Activated CD4-positive, alpha-beta memory T cell treated with anti-CD3 and anti-CD28 coated beads for 36 hours (primary cell): ENCODE measurements at regions of chr17 and their contacts with region 1.

Region 1: DNA sequence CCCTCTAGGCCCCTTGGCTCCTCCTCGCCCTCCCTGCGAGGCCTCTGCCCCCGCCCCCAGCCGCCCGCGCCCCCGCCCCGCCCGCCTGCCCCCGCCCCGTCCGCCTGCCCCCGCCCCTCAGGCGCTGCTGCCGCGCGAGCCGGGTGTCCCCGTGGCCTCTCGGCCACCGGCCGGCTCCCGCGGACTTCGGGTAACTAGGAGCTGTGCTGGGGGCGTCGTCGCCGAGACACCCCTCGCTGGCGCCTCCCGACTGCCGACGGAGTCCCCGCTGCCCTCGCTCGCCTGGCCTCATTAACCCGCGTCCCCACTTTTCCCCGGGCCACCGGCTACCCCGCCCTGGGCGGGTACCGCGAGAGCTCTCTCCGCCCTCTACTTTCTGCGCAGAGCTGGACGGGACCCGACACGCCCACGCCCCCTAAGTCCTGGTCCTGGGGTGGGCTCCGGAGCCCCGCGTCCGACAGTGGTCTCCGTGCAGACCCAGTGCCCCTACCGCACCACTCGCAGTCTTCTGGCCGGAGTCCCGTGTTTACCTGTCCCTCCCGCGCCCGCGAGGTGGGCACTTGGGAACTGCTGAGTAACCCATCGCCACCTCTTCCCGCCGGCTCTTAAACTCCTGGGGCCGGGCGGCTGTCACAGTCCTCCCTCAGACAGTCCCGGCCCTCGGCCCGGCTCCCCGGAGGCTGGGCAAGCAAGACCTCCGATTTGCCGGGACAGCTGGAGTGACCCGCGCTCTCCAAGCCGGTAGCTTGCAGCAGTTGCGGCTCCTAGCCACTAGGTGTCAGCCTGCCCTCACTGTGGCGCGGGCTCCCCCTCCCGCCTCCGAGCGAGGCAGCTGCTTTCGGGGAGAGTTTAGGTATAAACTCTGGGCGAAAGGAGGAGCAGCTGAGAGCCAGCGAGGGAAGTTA is at the start of gene TLCD1:
- DNase-seq: peak; percentile 96
- H3K4me3 Mint-ChIP-seq: peak within 1 kb of the TSS; percentile 93
- H3K27ac Mint-ChIP-seq: peak within 1 kb of the TSS; percentile 98
- H3K4me1 Mint-ChIP-seq: peaks cover 47% of the 10 kb centered on the region
- H3K27me3 Mint-ChIP-seq: no peaks in the 10 kb centered on the region
- total RNA-seq, gene TLCD1: 9.1 to 9.5 TPM

Region 2: DNA sequence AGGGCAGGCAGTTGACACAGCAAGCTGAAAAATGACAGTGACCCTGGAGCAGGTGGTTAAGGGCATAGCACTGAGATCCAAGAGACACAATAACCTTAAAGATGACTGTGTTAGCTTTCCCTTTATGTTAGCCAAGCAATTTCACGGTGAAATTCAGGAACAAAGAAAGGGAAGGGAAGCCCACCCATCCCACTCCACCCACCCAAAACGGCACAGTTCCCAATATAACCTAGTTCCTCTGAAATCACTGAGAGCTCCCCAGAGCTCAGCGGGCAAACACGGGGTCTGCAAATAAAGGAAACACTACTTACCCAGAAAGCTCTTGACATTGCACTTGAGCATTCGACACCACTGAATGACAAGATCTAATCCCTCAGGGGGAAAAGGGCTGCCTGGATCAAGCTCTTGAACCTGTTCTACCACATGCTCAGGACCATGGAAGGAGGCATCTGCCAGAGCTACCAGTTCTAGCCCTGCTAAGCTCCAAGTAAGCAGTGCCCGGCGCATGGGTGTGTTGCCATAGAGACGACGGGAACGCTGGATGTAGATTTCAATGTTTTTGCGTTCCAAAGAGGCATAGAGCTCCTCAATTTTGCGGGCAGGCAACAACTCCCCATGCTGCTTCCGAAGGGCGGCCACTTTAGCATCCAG is 92.1 kb before region 1 on chr17:
- CTCF ChIA-PET with region 1: no interaction called
- POLR2A ChIA-PET with region 1: no interaction called
- intact Hi-C with region 1: no loop called
- DNase-seq: no peak
- H3K4me3 Mint-ChIP-seq: no peak overlapping the region
- H3K27ac Mint-ChIP-seq: no peak overlapping the region
- H3K4me1 Mint-ChIP-seq: peaks cover 12% of the 10 kb centered on the region
- H3K27me3 Mint-ChIP-seq: no peaks in the 10 kb centered on the region

Region 3: GRCh38 chr17:28710861-28711722 is 15.4 kb before region 1 on chr17:
- CTCF ChIA-PET with region 1: interaction called, 23 read pairs
- POLR2A ChIA-PET with region 1: interaction called, 15 read pairs
- intact Hi-C with region 1: no loop called
- DNase-seq: peak; percentile 94
- H3K4me3 Mint-ChIP-seq: peak overlapping the region; percentile 73
- H3K27ac Mint-ChIP-seq: peak overlapping the region; percentile 80
- H3K4me1 Mint-ChIP-seq: peaks cover 23% of the 10 kb centered on the region
- H3K27me3 Mint-ChIP-seq: peaks cover 12% of the 10 kb centered on the region

Region 4: DNA sequence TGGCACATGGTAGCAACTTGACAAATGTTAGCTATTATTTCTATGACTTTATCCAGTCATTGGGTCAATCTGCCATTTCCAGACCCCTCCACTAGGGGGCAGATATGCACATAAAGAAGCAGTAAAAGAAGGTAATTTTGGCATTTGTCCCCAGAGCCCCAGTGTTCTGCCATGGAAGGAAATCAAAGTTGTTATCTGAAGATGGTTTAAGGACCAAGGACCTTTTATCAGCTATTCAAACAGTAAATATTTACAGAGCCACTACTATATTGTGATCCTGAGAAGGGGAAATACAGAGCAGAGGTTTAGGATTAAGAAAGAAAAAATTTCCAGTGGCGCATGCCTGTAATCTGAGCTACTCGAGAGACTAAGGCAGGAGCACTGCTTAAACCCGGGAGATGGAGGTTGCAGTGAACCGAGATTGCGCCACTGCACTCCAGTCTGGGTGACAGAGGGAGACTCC is 37.4 kb after region 1 on chr17:
- CTCF ChIA-PET with region 1: interaction called, 92 read pairs
- POLR2A ChIA-PET with region 1: interaction called, 23 read pairs
- intact Hi-C with region 1: loop called (anchors 1 kb)
- DNase-seq: peak; percentile 84
- H3K4me3 Mint-ChIP-seq: no peak overlapping the region
- H3K27ac Mint-ChIP-seq: peak overlapping the region; percentile 73
- H3K4me1 Mint-ChIP-seq: peaks cover 23% of the 10 kb centered on the region
- H3K27me3 Mint-ChIP-seq: no peaks in the 10 kb centered on the region

Region 5: GRCh38 chr17:28896884-28897768 is 170.6 kb after region 1 on chr17 and contains the start of gene FLOT2:
- CTCF ChIA-PET with region 1: interaction called, 38 read pairs
- POLR2A ChIA-PET with region 1: interaction called, 10 read pairs
- intact Hi-C with region 1: no loop called
- DNase-seq: peak; percentile 81
- H3K4me3 Mint-ChIP-seq: peak within 1 kb of the TSS; percentile 97
- H3K27ac Mint-ChIP-seq: peak within 1 kb of the TSS; percentile 92
- H3K4me1 Mint-ChIP-seq: peaks cover 64% of the 10 kb centered on the region
- H3K27me3 Mint-ChIP-seq: no peaks in the 10 kb centered on the region
- total RNA-seq, gene FLOT2: 110 to 118 TPM

Region 6: DNA sequence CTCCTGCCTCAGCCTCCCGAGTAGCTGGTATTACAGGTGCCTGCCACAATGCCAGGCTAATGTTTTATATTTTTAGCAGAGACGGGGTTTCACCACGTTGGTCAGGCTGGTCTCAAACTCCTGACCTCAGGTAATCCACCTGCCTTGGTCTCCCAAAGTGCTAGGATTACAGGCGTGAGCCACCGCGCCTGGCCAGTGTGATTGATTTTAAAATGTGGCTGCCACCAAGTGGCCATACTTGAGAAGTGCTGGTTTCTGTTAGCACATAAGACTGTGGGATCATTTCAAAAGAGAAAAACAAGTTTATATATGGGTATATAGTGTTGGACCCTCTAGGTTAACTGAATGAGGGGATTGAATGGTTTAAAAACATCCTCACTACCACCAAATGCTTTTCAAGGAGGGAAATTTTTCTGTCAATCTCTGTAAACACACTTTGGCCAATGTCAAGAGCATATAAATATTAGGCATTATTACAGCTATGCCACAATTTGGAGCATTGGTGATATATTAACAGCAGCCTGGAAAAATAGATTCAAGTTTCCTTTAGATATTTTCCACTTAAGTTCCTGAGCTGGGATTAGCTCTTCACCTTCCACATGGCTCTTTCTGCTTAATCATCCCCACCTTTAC is 189.9 kb after region 1 on chr17:
- CTCF ChIA-PET with region 1: interaction called, 38 read pairs
- POLR2A ChIA-PET with region 1: interaction called, 5 read pairs
- intact Hi-C with region 1: no loop called
- DNase-seq: peak; percentile 56
- H3K4me3 Mint-ChIP-seq: no peak overlapping the region
- H3K27ac Mint-ChIP-seq: no peak overlapping the region
- H3K4me1 Mint-ChIP-seq: peaks cover 14% of the 10 kb centered on the region
- H3K27me3 Mint-ChIP-seq: no peaks in the 10 kb centered on the region

Region 7: DNA sequence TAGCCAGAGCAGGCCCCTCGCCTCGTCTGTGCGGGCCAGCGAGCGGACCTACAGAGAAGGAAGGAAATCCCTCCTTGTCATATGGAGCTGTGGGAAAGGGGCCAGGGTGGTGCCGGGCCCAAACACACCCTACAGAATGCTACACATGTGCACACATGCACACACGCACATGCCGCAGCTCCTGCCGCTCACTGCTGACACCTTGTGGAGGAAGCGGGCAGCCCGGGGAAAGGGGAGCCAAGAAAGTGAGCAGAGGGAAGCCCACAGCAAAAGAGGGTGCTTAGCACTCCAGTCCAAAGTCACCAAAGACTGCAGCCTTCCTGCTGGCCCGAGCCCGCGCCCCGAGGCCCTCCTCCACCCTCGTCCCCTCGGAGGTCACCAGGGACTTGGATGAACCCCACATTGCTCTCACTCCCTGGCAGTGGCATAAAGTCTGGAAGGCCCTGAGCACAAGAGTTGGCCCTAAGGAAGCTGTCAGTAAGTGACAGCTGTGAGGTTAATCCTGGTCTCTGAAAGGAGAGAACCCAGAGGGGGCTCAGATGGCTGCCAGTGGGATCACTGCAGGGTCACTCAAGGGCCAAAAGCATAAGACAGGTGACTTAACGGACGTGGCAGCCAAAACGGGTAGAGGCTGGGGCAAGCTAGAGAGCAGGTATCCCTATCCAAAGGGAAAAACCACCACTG is 385.5 kb after region 1 on chr17:
- CTCF ChIA-PET with region 1: interaction called, 30 read pairs
- POLR2A ChIA-PET with region 1: interaction called, 7 read pairs
- intact Hi-C with region 1: loop called (anchors 5 kb)
- DNase-seq: peak; percentile 80
- H3K4me3 Mint-ChIP-seq: no peak overlapping the region
- H3K27ac Mint-ChIP-seq: no peak overlapping the region
- H3K4me1 Mint-ChIP-seq: peaks cover 2% of the 10 kb centered on the region
- H3K27me3 Mint-ChIP-seq: no peaks in the 10 kb centered on the region

Region 8: GRCh38 chr17:29293890-29294579 is 567.6 kb after region 1 on chr17 and contains the start of gene NUFIP2:
- CTCF ChIA-PET with region 1: no interaction called
- POLR2A ChIA-PET with region 1: no interaction called
- intact Hi-C with region 1: loop called (anchors 1 kb)
- DNase-seq: peak; percentile 99
- H3K4me3 Mint-ChIP-seq: peak within 1 kb of the TSS; percentile 99
- H3K27ac Mint-ChIP-seq: peak within 1 kb of the TSS; percentile 96
- H3K4me1 Mint-ChIP-seq: peaks cover 31% of the 10 kb centered on the region
- H3K27me3 Mint-ChIP-seq: no peaks in the 10 kb centered on the region
- total RNA-seq, gene NUFIP2: 45.6 to 56.9 TPM